Right cardiac atrium (tissue), 5 donors: ENCODE measurements at regions of chr6 and their contacts with region 1.

Region 1: DNA sequence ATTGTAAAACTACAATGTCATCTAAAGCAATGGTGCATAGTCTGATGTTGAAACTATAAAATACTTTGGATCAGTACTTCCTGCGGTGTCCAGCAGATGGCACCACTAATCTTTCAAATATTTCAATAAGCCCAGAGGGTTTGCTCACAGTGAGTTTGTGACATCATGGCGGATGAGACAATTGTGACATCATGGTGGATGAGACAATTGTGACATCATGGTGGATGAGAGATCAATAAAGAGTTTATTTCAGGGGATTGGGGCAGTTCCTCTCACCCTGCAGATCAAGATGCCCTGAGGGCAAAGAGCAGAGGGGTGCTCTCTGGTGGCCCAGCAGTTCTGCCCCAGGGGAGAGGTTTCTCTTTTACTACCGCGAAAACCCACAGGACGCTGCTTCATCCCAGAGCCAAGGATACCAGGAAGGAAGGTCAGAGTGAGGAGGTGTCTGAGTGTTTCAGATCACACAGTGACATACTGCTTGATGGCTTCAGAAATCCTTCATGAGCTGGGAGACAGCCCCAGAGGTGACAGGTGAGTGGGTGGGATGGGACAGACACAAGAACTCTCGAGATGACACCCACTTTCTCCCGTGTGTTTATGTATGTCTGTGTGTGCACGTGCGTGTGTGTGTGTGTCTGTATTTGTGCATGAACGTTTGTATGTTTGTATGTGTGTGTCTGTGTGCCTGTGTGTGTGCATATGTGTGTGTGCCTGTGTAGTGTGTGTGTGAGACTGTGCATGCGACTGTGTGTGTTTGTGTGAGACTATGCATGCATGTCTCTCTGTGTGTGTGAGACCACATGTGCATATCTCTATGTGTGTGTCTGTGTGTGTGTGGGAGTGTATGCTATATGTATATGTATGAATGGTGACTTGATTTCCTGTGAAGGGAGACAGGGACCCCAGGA is 7.3 kb upstream of the ULBP2 start:
- DNase-seq: peak in 1 of 3 donors; percentile 42
- ATAC-seq: peak; percentile 57 to 74
- H3K4me3 ChIP-seq: no peak overlapping the region
- H3K27ac ChIP-seq: no peak overlapping the region
- H3K4me1 ChIP-seq: no peaks in the 10 kb centered on the region
- H3K27me3 ChIP-seq: no peaks in the 10 kb centered on the region

Region 2: GRCh38 chr6:149834513-149835481 is 99.7 kb before region 1 on chr6:
- intact Hi-C with region 1: loop called in 1 of 4 experiments (anchors 5 kb)
- DNase-seq: peak in 1 of 3 donors; percentile 60
- ATAC-seq: peak; percentile 38 to 47
- H3K4me3 ChIP-seq: no peak overlapping the region
- H3K27ac ChIP-seq: no peak overlapping the region
- H3K4me1 ChIP-seq: no peaks in the 10 kb centered on the region
- H3K27me3 ChIP-seq: no peaks in the 10 kb centered on the region

Region 3: DNA sequence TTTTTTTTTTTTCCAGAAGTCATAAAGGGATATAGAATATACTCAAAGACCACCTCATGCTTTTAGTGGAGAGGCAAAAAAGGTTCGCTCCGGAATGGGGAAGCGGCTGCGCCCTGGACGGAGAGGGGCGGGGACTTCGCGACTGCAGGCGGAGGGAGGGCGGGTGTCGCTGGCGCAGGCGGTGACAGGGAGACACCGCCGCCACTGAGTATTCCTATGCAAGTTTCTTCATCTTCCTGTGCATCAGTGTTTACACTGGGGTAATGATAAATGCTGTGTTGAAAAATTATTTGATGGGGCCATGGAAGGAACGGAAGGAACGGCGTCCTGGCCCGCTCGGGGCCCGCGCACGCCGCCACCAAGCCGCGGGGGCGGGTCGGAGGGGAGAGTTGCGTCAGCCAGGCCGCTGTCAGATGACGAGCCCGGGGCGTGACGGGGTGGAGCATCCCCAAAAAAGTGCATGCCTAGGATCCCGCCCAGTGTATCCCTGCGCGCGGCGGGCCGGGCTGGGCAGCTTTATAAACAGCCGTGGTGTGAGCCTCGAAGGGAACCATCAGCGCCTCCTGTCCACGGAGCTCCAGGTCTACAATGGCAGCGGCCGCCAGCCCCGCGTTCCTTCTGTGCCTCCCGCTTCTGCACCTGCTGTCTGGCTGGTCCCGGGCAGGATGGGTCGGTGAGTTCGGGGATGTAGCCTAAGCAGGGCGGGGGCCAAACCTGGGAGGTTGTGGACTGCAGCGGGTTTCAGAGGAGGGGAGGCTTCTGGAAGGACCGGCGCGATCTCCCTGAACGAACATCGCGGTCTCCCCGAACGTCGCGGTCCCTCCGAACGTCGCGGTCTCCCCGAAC is 29.2 kb after region 1 on chr6 and contains the start of gene ULBP1:
- intact Hi-C with region 1: no loop called
- DNase-seq: peak; percentile 92 to 96 (median 94)
- ATAC-seq: peak; percentile 96 to 97
- H3K4me3 ChIP-seq: peak within 1 kb of the TSS; percentile 51
- H3K27ac ChIP-seq: no peak within 1 kb of the TSS
- H3K4me1 ChIP-seq: peaks cover 4% of the 10 kb centered on the region
- H3K27me3 ChIP-seq: no peaks in the 10 kb centered on the region
- total RNA-seq, gene ULBP1: 0.20 to 0.22 (median 0.21) TPM in 3 of 4 donors, not detected in the other

Region 4: GRCh38 chr6:150016324-150017185 is 82.1 kb after region 1 on chr6:
- intact Hi-C with region 1: loop called (anchors 2 to 5 kb)
- DNase-seq: peak in 2 of 3 donors; percentile 51 to 78
- ATAC-seq: peak; percentile 68 to 71
- H3K4me3 ChIP-seq: no peak overlapping the region
- H3K27ac ChIP-seq: no peak overlapping the region
- H3K4me1 ChIP-seq: no peaks in the 10 kb centered on the region
- H3K27me3 ChIP-seq: no peaks in the 10 kb centered on the region